Lower leg skin (tissue), 4 donors: ENCODE measurements at regions of chr11 and their contacts with region 1.

Region 1: GRCh38 chr11:10669258-10670033 is 24.1 kb downstream of the IRAG1 start:
- DNase-seq: no peak
- H3K4me3 ChIP-seq: no peak overlapping the region
- CTCF ChIP-seq: no peak
- POLR2A ChIP-seq: no peak

Region 2: GRCh38 chr11:10225553-10225952 is 443.9 kb before region 1 on chr11:
- intact Hi-C with region 1: loop called (anchors 5 kb)
- DNase-seq: no peak
- H3K4me3 ChIP-seq: no peak overlapping the region
- CTCF ChIP-seq: no peak
- POLR2A ChIP-seq: no peak